ENCODE measurements at regions of chr20 and their contacts with region 1.

Region 1: GRCh38 chr20:54680872-54681619 is 205.7 kb downstream of the DOK5 start:
- DNase-seq: no peak
- H3K4me3 ChIP-seq: no peak overlapping the region
- CTCF ChIP-seq: peak; percentile 48

Region 2: GRCh38 chr20:54668271-54669039 is 12.6 kb before region 1 on chr20:
- CTCF ChIA-PET with region 1: interaction called, 52 read pairs
- POLR2A ChIA-PET with region 1: no interaction called
- DNase-seq: no peak
- H3K4me3 ChIP-seq: no peak overlapping the region
- CTCF ChIP-seq: peak; percentile 63

Region 3: GRCh38 chr20:54726768-54727422 is 45.8 kb after region 1 on chr20:
- CTCF ChIA-PET with region 1: no interaction called
- POLR2A ChIA-PET with region 1: no interaction called
- DNase-seq: no peak
- H3K4me3 ChIP-seq: no peak overlapping the region
- CTCF ChIP-seq: no peak

Region 4: GRCh38 chr20:56343861-56344381 is 1662.9 kb after region 1 on chr20:
- CTCF ChIA-PET with region 1: interaction called, 47 read pairs
- POLR2A ChIA-PET with region 1: no interaction called
- DNase-seq: no peak
- H3K4me3 ChIP-seq: peak overlapping the region; percentile 33
- CTCF ChIP-seq: peak; percentile 87